Activated T-helper 1 cell treated with anti-CD3 and anti-CD28 coated beads, Interleukin-12 subunit alpha, Interleukin-12 subunit beta, Interleukin-2, Interleukin-4 antibody, amounts not matched to agents 30 ng/mL and 10 ng/mL and 1 ng/mL, durations not matched to agents 14 hours and 24 hours and 36 hours (primary cell): ENCODE measurements at regions of chr7 and their contacts with region 1.

Region 1: GRCh38 chr7:92904292-92905131 is 68.1 kb upstream of the CDK6 start:
- DNase-seq: peak; percentile 82
- H3K4me3 Mint-ChIP-seq: peak overlapping the region; percentile 55
- H3K27ac Mint-ChIP-seq: peak overlapping the region; percentile 94
- H3K4me1 Mint-ChIP-seq: peaks cover 28% of the 10 kb centered on the region
- H3K27me3 Mint-ChIP-seq: no peaks in the 10 kb centered on the region

Region 2: GRCh38 chr7:92621026-92621540 is 283.4 kb before region 1 on chr7:
- intact Hi-C with region 1: loop called (anchors 1 kb)
- DNase-seq: peak; percentile 74
- H3K4me3 Mint-ChIP-seq: peak overlapping the region; percentile 75
- H3K27ac Mint-ChIP-seq: peak overlapping the region; percentile 89
- H3K4me1 Mint-ChIP-seq: peaks cover 58% of the 10 kb centered on the region
- H3K27me3 Mint-ChIP-seq: no peaks in the 10 kb centered on the region

Region 3: DNA sequence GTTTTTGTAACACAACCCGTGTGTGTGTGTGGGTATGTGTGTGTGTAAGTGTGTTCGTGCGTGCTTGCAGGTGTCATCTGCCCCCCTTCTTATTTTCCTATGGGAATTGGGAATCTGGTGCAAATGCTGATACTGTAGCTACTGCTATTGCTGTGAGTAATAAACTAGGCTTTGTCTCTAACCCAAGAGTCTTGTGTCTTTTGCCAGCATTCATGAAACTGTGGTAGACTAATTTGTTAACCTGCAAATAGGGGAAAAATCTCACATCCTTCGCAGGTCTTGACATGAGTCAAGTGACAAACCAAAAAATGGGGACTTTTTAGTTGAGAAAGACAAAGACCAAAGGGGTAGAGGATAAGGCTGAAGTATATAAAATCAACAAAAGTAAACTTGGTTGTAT is 256.4 kb before region 1 on chr7:
- intact Hi-C with region 1: loop called (anchors 1 kb)
- DNase-seq: no peak
- H3K4me3 Mint-ChIP-seq: peak overlapping the region; percentile 57
- H3K27ac Mint-ChIP-seq: peak overlapping the region; percentile 98
- H3K4me1 Mint-ChIP-seq: peaks cover 91% of the 10 kb centered on the region
- H3K27me3 Mint-ChIP-seq: no peaks in the 10 kb centered on the region

Region 4: GRCh38 chr7:92731335-92732063 is 173.0 kb before region 1 on chr7:
- intact Hi-C with region 1: loop called (anchors 1 kb)
- DNase-seq: no peak
- H3K4me3 Mint-ChIP-seq: peak overlapping the region; percentile 23
- H3K27ac Mint-ChIP-seq: peak overlapping the region; percentile 92
- H3K4me1 Mint-ChIP-seq: peaks cover 80% of the 10 kb centered on the region
- H3K27me3 Mint-ChIP-seq: no peaks in the 10 kb centered on the region

Region 5: DNA sequence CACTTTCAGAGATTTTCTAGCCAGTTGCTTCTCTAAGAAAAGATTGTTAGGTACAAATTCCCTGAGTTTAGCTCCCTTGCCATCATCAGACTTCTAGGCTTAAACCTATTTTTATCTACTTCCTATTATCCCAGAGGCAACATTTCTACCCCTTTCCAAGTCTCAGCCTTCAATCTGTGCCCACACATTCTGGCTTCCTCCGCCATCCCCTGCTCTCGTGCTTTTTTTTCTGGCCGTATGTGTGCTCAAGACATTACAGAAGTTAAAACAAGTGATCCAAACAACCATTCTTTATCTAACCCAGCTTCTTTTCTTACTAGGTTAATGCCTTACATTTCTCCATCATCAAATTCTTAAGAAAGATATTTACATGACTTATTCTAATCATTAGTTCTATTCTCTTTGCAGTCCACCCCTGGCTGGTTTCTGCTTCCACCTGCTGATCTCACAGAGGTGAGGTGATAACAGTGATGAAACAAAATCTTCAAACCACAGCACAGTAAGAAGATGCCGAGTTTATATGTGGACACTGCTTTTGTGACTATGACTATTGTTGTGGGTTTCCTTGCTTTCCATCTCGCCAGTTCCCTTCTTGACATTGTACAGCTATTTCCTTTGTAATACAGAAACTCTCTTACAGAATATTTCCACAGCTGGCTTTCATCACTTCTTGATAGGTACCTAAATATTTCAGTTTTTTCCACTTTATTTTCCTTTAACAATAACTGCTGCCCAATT is 49.8 kb before region 1 on chr7:
- intact Hi-C with region 1: loop called (anchors 1 kb)
- DNase-seq: no peak
- H3K4me3 Mint-ChIP-seq: peak overlapping the region; percentile 4
- H3K27ac Mint-ChIP-seq: peak overlapping the region; percentile 89
- H3K4me1 Mint-ChIP-seq: peaks cover 17% of the 10 kb centered on the region
- H3K27me3 Mint-ChIP-seq: no peaks in the 10 kb centered on the region

Region 6: DNA sequence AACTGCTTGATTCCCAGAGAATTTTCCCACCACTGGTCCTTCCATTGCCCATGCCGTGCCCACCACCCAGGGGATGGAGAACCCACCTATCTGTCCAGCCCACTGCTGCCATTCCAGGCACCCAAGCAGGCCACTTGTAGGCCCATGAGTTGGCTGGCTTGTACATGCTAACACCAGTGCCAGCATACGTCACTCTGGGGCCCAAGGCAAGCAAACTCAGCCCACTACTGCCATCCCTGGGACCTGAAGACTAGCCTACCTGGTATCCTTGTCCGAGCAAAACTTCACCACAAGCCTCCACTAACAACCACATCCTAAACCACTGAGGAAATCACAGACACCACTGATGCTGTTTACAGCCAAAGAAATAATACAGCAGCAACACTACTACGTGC is 23.4 kb before region 1 on chr7:
- intact Hi-C with region 1: no loop called
- DNase-seq: no peak
- H3K4me3 Mint-ChIP-seq: peak overlapping the region; percentile 43
- H3K27ac Mint-ChIP-seq: peak overlapping the region; percentile 76
- H3K4me1 Mint-ChIP-seq: peaks cover 61% of the 10 kb centered on the region
- H3K27me3 Mint-ChIP-seq: no peaks in the 10 kb centered on the region

Region 7: DNA sequence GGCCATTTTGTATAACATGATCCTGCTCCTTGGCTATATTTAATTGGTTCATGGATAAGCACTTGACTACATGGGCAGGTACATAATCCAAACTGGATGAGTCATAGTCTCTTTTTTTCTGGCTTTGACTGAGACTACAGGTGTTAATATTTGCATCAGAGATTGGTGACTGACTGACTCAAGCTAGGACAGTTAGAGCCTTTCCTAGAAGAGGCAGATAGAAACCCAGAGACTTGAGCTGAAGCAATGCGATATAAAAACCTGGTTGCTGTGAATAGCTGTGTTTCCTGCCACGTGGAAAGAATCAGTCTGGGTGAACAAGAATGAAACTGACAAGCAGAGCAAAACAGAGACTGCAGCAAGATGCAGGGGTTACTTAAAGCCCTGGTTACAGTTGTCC is 132.3 kb after region 1 on chr7:
- intact Hi-C with region 1: loop called (anchors 1 kb)
- DNase-seq: peak; percentile 53
- H3K4me3 Mint-ChIP-seq: no peak overlapping the region
- H3K27ac Mint-ChIP-seq: peak overlapping the region; percentile 85
- H3K4me1 Mint-ChIP-seq: peaks cover 50% of the 10 kb centered on the region
- H3K27me3 Mint-ChIP-seq: no peaks in the 10 kb centered on the region

Region 8: DNA sequence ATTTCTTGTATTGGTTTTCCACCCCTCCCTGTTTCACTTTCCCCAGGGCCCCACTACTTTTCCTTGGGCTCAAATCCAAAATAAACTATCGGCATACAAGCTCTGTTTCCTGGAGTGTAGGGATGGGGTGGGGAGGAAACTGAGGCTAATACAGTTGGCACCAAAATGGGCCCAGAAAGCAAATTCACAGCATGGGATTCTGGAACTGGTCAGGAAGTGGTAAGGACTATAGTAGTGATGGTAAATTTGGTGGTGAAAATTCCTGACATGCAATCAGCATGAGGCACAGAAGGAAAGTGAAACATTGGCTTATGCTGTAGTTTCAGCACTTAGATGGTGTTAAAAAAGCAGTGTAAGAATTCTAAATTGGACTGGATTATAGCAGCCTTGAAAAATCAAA is 252.4 kb after region 1 on chr7:
- intact Hi-C with region 1: no loop called
- DNase-seq: no peak
- H3K4me3 Mint-ChIP-seq: no peak overlapping the region
- H3K27ac Mint-ChIP-seq: no peak overlapping the region
- H3K4me1 Mint-ChIP-seq: peaks cover 8% of the 10 kb centered on the region
- H3K27me3 Mint-ChIP-seq: no peaks in the 10 kb centered on the region

Region 9: GRCh38 chr7:93231799-93232672 is 327.5 kb after region 1 on chr7 and contains the start of gene VPS50:
- intact Hi-C with region 1: loop called (anchors 1 kb)
- DNase-seq: peak; percentile 91
- H3K4me3 Mint-ChIP-seq: peak within 1 kb of the TSS; percentile 98
- H3K27ac Mint-ChIP-seq: peak within 1 kb of the TSS; percentile 93
- H3K4me1 Mint-ChIP-seq: peaks cover 18% of the 10 kb centered on the region
- H3K27me3 Mint-ChIP-seq: peaks cover 7% of the 10 kb centered on the region
- total RNA-seq, gene VPS50: 16.7 and 17.0 TPM in 2 replicates